RWPE1 (cell line): ENCODE measurements at regions of chr17 and their contacts with region 1.

Region 1: DNA sequence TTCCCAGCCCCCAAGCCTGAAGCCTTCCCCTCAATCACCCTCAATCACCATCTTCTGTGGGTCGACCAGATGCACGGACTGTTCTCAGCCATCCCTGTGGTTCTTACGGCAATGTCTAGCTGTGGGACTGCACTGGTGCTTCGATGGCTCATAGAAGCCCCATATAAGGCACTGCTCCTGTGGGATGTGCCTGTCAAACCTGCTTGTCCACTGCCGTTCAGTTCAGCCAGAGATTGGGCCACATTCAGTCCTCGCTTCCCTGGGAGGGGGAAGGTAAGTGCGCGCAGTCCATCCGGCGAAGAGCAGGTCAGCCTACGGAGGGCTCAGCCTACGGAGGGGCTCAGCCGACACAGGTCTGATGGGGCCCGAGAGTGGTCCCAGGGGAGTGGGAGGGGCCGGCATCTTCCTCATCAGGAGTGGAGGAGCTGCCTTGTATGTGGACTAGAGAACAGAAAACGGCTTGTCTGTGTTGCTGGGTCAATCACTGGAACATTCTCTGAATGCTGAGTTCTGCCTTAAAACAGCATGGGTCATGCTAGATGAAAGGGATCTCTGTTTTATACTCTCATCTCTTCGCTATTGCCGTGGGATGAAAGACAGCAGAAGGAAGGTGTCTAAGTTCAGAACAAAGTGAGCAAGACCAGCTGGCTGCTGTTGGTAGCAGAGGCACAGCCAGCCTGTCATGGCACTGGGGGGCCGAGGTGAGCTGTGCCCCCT is at the start of gene CARD14:
- DNase-seq: peak; percentile 72
- H3K27ac ChIP-seq: no peak within 1 kb of the TSS
- CTCF ChIP-seq: no peak

Region 2: DNA sequence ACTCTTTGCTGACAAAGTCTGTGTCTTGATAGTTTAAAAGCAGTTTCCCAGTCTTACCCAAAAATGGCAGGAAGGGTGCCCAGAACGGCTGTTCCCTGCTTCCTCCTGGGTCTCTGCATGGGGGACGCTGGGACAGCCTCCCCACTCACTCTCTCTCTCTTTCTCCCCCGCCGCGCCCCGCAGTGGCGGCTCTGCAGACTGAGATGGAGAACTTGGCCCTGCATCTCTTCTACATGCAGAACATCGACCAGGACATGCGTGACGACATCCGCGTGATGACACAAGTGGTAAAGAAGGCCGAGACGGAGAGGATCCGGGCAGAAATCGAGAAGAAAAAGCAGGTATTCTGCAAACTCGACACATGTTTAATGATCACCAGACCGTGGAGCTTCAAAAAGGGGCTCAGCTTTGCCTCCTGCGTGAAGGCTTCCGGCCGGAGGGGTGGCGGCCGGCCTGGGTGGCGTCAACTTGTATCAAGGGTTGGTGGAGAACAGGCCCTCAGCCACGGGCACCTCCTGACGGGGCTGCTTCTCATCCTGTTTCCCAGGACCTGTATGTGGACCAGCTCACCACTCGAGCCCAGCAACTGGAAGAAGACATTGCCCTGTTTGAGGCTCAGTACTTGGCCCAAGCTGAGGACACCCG is 111.5 kb before region 1 on chr17:
- CTCF ChIA-PET with region 1: no interaction called
- POLR2A ChIA-PET with region 1: interaction called, 15 read pairs
- DNase-seq: no peak
- H3K27ac ChIP-seq: no peak overlapping the region
- CTCF ChIP-seq: no peak

Region 3: DNA sequence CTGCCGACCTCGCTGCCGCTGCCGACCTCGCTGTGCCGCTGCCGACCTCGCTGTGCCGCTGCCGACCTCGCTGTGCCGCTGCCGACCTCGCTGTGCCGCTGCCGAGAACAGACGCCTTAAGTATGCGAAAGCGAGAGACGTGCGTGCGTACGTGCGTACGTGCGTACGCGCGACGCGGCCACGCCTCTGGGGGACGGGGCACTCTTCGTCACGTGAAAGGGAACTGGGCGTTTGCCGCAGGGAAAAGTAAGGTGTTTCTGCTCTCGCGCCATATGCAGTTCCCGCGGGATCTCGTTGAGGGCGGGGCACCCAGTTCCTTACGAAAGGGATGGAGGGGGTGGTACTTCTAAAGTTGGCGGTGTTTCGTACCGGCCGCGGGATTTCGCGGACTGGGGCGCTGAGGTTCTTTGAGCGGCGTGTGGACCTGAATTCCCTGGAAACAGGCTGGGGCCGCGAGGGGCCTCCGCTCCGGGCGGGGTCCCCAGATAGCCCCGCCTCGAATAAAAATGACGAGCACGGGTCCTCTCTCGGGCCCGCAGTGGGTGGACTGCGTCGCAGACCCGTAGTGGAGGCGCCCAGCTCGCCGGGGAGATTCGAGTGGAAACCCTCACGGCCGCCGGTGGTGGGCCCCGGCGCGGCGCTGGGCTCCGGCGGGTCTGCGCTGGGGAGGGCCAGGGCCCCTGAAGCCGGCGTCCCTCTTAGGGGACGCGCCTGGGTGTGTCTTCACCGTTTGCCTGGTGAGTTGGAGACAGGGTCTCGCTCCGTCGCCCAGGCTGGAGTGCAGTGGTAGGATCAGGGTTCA is 22.7 kb before region 1 on chr17 and contains the start of gene EIF4A3:
- CTCF ChIA-PET with region 1: no interaction called
- POLR2A ChIA-PET with region 1: interaction called, 11 read pairs
- DNase-seq: peak; percentile 98
- H3K27ac ChIP-seq: peak within 1 kb of the TSS; percentile 85
- CTCF ChIP-seq: 0 out of 2 replicates have a peak, but pooled peaks have one; percentile 1

Region 4: DNA sequence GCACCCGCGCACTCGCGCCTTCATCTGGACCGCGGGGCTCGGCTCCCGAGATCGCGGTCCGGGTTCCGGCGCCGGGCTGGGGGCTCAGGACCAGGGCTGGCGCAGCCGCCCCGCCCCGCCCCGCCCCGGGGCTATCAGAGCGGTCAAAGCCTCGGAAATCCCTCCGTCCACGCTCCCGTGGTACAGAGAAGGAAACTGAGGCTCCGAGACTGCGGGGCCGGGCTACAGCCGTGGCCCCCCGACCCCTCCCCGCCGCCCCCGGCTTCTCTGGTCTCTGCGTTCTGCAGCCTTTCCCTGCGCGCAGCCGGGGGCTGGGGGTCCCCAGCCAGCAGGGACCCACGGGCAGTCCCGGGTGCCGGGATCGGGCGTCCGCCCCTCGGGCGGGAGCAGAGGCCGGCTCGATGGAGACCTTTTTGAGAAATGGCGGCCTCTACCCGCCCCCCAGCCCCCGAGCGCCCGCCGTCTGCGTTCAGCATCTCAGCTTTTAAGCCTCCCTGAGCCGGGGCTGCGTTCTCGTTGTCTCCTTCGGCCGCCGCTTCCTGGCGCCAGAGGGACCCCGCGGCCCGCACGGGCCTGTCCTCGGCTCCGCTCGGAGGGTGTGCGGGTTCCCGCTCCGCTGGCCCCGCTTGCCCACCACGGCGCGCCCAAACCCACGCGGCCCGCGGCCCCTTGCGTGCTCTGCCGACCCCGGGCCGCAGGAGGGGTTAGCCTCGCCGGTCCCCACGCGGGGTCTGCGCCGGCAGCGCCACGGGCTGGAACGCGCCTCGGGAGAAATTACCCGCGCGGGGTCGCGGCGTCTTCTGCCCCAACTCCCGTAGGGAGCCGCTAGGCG is 307.9 kb after region 1 on chr17:
- CTCF ChIA-PET with region 1: no interaction called
- POLR2A ChIA-PET with region 1: no interaction called
- DNase-seq: peak; percentile 51
- H3K27ac ChIP-seq: no peak overlapping the region
- CTCF ChIP-seq: peak; percentile 65